Activated naive CD4-positive, alpha-beta T cell treated with anti-CD3 and anti-CD28 coated beads for 36 hours (primary cell): ENCODE measurements at regions of chr19 and their contacts with region 1.

Region 1: GRCh38 chr19:18831524-18832305 is at the start of gene UPF1:
- DNase-seq: peak; percentile 96
- H3K4me3 Mint-ChIP-seq: peak within 1 kb of the TSS; percentile 97
- H3K27ac Mint-ChIP-seq: peak within 1 kb of the TSS; percentile 86
- H3K4me1 Mint-ChIP-seq: peaks cover 34% of the 10 kb centered on the region
- H3K27me3 Mint-ChIP-seq: no peaks in the 10 kb centered on the region
- total RNA-seq, gene UPF1: 95.0 to 105 TPM

Region 2: GRCh38 chr19:18571564-18572300 is 260.0 kb before region 1 on chr19 and contains the start of gene UBA52:
- CTCF ChIA-PET with region 1: no interaction called
- intact Hi-C with region 1: loop called (anchors 5 kb)
- DNase-seq: peak; percentile 99
- H3K4me3 Mint-ChIP-seq: peak within 1 kb of the TSS; percentile 90
- H3K27ac Mint-ChIP-seq: peak within 1 kb of the TSS; percentile 93
- H3K4me1 Mint-ChIP-seq: peaks cover 30% of the 10 kb centered on the region
- H3K27me3 Mint-ChIP-seq: no peaks in the 10 kb centered on the region
- total RNA-seq, gene UBA52: 1,997 to 2,122 TPM

Region 3: GRCh38 chr19:18683213-18683939 is 148.3 kb before region 1 on chr19 and contains the start of gene CRTC1:
- CTCF ChIA-PET with region 1: no interaction called
- intact Hi-C with region 1: loop called (anchors 1 kb)
- DNase-seq: peak; percentile 94
- H3K4me3 Mint-ChIP-seq: peak within 1 kb of the TSS; percentile 87
- H3K27ac Mint-ChIP-seq: peak within 1 kb of the TSS; percentile 84
- H3K4me1 Mint-ChIP-seq: peaks cover 18% of the 10 kb centered on the region
- H3K27me3 Mint-ChIP-seq: no peaks in the 10 kb centered on the region
- total RNA-seq, gene CRTC1: 4.0 to 4.2 TPM

Region 4: DNA sequence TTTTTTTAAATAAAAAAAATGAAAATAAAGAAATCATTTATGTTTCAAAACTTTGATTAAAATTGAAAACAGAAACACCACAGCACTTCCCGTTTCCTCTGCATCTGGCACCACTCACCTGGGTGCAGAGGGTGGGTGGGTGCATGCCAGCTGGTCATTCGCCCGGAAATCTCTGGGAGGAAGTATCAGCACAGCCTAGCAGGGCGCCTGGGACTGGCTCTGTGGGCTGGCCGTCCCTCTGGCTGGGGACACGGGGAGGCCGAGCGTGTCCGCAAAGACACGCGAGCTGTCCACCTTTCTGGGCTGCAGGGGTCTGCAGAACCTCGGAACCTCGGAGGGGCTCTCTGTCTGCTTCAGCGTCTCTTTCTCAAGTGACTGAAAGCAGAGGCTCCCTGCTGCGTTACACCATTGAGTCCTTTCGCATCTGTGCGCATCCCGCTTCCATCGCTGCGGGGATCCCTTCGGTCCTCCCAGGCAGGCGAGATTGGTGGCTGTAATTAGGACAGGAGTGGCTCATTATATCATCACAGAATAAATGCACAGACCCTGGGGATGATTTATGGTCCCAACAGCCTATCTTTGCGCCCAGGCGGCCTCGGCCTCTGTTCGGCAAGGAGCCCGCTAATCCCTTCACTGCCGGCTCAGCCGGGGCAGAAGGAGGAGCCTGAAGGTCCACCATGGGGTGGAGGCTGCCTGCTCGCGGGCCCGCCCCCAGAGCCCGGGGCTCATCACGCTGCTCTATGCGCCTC is 131.0 kb before region 1 on chr19:
- CTCF ChIA-PET with region 1: no interaction called
- intact Hi-C with region 1: loop called (anchors 5 kb)
- DNase-seq: peak; percentile 81
- H3K4me3 Mint-ChIP-seq: peak overlapping the region; percentile 53
- H3K27ac Mint-ChIP-seq: no peak overlapping the region
- H3K4me1 Mint-ChIP-seq: peaks cover 40% of the 10 kb centered on the region
- H3K27me3 Mint-ChIP-seq: no peaks in the 10 kb centered on the region

Region 5: GRCh38 chr19:18846862-18847548 is 15.3 kb after region 1 on chr19:
- CTCF ChIA-PET with region 1: interaction called, 41 read pairs
- intact Hi-C with region 1: loop called (anchors 1 kb)
- DNase-seq: peak; percentile 79
- H3K4me3 Mint-ChIP-seq: no peak overlapping the region
- H3K27ac Mint-ChIP-seq: no peak overlapping the region
- H3K4me1 Mint-ChIP-seq: peaks cover 46% of the 10 kb centered on the region
- H3K27me3 Mint-ChIP-seq: no peaks in the 10 kb centered on the region

Region 6: DNA sequence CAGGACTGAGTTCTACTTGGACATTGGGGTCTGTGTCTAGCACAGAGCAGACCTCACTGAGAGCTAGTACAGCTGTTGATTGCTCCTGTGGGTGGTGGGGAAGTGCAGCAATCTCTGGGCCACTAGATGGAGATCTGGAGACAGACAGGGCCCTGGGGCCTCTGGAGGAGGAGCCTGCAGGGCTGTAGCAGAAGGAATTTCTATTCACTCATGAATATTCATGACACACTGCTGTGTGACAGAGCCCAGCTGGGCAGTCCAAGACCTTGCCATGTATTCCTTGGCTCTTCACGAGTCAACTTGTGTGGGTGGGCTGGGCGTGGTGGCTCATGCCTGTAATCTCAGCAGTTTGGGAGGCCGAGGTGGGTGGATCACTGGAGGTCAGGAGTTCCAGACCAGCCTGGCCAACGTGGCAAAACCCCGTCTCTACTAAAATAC is 164.1 kb after region 1 on chr19:
- CTCF ChIA-PET with region 1: no interaction called
- intact Hi-C with region 1: no loop called
- DNase-seq: peak; percentile 19
- H3K4me3 Mint-ChIP-seq: no peak overlapping the region
- H3K27ac Mint-ChIP-seq: no peak overlapping the region
- H3K4me1 Mint-ChIP-seq: peaks cover 11% of the 10 kb centered on the region
- H3K27me3 Mint-ChIP-seq: no peaks in the 10 kb centered on the region

Region 7: DNA sequence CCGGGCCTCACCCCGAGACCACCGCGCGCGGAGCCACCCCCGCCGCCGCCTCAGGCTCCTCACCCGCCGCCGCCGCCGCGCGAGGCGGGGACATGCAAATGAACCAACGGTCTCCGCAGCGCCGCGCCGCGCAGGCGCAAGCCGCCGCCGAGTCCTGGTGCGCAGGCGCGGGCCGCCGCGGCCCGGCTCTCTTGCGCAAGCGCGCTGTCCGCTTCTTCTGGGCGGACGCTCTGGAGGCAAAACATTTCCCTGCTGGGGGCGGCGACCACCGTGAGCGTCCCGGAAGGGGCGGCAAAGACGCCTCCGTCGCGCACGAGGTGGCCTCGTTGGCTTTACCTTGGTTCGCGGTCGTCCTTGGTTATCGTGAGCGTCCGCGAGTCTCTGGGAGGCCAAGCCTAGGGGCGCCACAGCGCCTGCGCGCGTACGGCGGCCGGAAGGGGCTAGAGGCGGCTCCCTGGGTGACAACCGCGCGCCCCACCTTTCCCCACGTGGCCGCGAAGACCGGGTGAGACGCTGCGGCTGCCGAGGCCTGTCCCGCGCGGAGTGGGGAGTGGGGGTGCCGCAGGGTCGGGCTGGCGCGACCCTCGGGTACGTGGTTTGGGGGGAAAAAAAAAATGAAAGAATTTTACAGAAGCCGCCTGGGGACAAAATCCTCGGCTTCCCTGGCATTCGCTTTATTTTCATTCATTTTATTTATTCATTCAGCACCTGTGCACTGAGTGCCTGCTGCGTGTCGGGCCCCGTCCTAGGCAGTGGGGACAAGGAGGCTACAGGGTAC is 201.9 kb after region 1 on chr19 and contains the starts of genes ARMC6 and SUGP2:
- CTCF ChIA-PET with region 1: no interaction called
- intact Hi-C with region 1: loop called (anchors 2 kb)
- DNase-seq: peak; percentile 85
- H3K4me3 Mint-ChIP-seq: peak within 1 kb of the TSS; percentile 95
- H3K27ac Mint-ChIP-seq: peak within 1 kb of the TSS; percentile 86
- H3K4me1 Mint-ChIP-seq: peaks cover 37% of the 10 kb centered on the region
- H3K27me3 Mint-ChIP-seq: no peaks in the 10 kb centered on the region
- total RNA-seq, gene ARMC6: 24.2 to 24.6 TPM
- total RNA-seq, gene SUGP2: 149 to 154 TPM